Left colon (tissue), 2 donors: ENCODE measurements at regions of chr5 and their contacts with region 1.

Region 1: GRCh38 chr5:133423618-133424282 is 188.6 kb downstream of the FSTL4 start:
- DNase-seq: peak in 1 of 2 donors; percentile 77
- ATAC-seq: peak; percentile 92

Region 2: DNA sequence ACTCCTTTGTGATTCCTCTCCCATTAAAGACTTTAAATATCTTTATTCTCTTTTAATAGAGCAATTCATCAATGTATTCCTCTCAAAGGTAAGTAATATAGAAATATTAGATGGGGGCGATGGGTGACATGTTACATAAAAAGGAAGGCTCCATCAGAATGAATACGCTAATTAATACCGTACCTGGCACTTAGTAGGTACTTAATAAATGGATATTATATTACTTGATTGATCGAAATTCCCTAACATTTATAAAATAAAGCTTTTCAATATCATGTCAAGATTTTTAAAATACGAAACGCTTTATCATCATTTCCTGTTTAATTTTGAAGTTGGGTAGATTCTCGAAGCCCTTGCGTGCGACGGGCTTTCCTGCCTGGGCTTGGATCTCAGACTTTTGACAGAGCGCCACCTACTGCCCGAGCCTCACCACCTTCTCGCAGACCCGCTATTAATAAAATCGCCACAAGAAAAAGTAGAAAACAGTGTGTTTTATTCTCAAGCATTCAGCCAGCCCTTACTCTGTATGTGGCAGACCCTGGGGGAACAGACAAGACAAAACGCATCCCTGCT is 445.3 kb after region 1 on chr5:
- intact Hi-C with region 1: loop called in 1 of 2 experiments (anchors 10 kb)
- DNase-seq: peak; percentile 49 to 83
- ATAC-seq: peak; percentile 64